ENCODE measurements at regions of chr5 and their contacts with region 1.

Region 1: DNA sequence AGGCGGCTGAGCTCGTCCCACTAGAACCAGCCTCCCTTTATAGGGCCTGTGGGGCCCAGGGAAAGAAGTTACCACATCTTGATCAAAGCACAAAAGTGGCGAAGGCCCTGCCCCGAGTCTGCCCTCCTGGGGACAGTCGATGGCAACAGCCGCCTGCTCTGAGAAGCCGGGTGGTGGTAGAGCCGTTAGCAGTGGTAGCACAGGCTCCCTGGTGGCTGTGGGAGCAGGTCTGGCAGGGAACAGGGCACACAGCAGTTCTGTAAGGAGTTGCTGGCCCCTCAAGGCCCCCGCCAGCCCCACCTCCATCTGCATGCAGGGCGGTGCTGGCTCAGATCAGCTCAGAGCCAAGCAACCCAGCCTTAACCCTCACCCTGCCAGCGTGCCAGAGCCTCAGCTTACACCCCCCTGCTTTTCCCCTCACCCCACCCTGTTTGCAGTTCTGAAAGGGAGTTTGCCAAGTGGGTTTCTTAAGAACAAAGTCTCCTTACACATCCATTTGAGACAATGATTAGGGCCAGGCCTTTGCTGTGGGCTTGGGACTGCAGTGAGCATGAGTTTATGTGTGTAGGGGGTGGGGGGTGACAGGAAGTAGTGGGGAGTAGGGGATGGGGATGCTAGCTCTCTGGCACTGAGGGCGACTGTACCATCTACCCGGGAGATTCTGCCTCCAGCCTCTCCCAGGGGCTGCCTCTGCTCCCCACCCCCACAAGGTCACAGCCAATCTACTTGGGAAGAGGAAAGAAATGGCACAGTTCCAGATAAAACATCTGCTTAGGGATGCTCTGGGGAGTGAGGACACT is 11.8 kb downstream of the ACSL6 start:
- DNase-seq: no peak
- H3K4me3 ChIP-seq: no peak overlapping the region
- H3K27ac ChIP-seq: no peak overlapping the region
- H3K4me1 ChIP-seq: peaks cover 17% of the 10 kb centered on the region
- H3K27me3 ChIP-seq: no peaks in the 10 kb centered on the region
- CTCF ChIP-seq: no peak
- POLR2A ChIP-seq: no peak

Region 2: DNA sequence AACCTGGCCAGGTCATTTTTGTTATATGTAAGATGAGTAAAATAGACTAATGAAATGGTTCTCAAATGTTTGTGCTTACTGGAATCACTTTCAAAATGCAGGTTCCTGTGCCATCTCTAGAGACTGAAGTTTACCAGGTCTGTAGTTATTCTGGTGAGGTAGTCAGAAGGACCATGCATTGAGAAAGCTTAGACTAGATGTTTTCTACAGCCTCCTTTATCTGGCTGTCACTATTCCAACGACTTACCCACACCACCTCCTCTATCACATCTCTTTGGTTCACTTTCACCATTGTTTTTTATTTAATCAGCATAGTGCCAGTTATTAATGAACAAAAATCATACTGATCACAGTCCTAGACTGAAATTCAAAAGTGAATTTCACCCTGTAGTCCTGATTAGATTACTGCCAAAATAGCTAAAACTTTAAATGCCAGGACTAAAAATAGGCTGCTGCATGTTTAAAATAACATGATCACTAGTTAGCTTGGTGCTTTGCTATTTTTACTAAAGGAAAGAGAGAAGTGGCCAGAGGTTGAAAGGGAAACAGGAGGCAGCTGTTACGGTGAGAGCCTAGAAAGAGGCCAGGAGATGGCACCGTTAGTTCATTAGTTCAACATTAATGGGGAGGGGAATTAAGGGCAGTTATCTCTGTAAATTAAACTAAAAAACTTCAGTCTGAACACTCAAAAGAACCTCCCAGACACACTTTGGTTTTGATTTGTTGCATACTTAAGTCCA is 189.0 kb before region 1 on chr5:
- CTCF ChIA-PET with region 1: no interaction called
- POLR2A ChIA-PET with region 1: no interaction called
- dilution Hi-C with region 1: no loop called
- intact Hi-C with region 1: loop called (anchors 1 kb)
- DNase-seq: peak; percentile 27
- H3K4me3 ChIP-seq: no peak overlapping the region
- H3K27ac ChIP-seq: no peak overlapping the region
- H3K4me1 ChIP-seq: peaks cover 21% of the 10 kb centered on the region
- H3K27me3 ChIP-seq: no peaks in the 10 kb centered on the region
- CTCF ChIP-seq: peak; percentile 4 to 8
- POLR2A ChIP-seq: no peak

Region 3: GRCh38 chr5:132055808-132056609 is 56.4 kb after region 1 on chr5:
- CTCF ChIA-PET with region 1: no interaction called
- POLR2A ChIA-PET with region 1: no interaction called
- dilution Hi-C with region 1: no loop called
- intact Hi-C with region 1: no loop called
- DNase-seq: no peak
- H3K4me3 ChIP-seq: no peak overlapping the region
- H3K27ac ChIP-seq: no peak overlapping the region
- H3K4me1 ChIP-seq: no peaks in the 10 kb centered on the region
- H3K27me3 ChIP-seq: peaks cover 0 to 1% of the 10 kb centered on the region in 2 experiments
- CTCF ChIP-seq: no peak
- POLR2A ChIP-seq: no peak

Measured in endothelial cell of umbilical vein (primary cell).